ENCODE measurements at regions of chr2 and their contacts with region 1.

Region 1: DNA sequence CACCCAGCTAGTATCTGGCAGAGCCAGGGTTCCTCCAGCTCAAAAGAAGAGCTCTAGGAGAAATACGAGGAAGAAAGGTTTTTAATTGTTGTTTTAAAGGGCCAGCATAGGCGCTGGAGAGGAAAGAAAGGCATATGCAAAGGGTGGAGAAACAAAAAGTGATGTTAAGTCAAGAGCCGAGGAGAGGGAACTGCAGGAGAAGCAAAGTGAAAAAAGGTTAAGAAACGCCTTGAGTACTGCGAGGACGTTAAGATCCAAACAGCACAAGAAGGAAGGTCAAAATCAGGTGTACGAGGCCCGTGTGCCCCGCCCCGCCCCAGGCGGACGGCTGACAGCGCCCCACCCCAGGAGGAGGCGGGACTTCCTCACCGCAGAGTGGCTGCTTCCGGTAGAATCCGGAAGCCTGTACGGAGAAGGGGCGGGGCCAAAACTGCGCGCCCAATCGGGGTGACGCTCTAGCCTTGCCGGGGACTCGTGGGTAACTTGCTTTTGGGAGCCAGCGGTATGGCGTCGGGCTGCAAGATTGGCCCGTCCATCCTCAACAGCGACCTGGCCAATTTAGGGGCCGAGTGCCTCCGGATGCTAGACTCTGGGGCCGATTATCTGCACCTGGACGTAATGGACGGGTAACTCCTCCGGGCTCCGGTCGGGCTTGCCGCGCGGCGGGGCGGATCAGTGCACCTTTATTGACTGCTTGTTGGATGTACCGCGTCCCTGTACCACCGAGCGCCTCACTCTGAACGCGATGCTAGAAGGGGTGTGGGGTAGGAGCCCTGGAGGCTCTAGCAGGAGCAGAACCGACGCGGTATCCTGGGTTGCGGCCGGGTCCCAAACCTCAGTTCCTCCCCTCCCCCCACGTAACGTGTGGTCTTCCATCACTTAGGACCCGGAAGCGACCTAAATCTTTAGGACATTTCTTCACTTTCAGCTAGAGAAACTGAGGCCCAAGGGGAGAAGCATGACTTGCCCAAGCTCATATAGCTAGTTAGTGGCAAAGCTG is at the start of gene RPE:
- DNase-seq: peak; percentile 93 to 97 (median 96)
- ATAC-seq: peak; percentile 94 to 99
- H3K4me3 Mint-ChIP-seq: peak within 1 kb of the TSS; percentile 90 to 98 (median 93)
- H3K27ac Mint-ChIP-seq: peak within 1 kb of the TSS; percentile 86 to 98 (median 94)
- H3K4me1 Mint-ChIP-seq: peaks cover 31 to 71% (median 69%) of the 10 kb centered on the region in 4 donors
- H3K27me3 Mint-ChIP-seq: no peaks in the 10 kb centered on the region
- polyA plus RNA-seq, gene RPE: 17.4 to 20.9 (median 17.7) TPM

Region 2: GRCh38 chr2:209970322-209971110 is 31.9 kb before region 1 on chr2:
- POLR2A ChIA-PET with region 1: no interaction called
- DNase-seq: no peak
- ATAC-seq: no peak
- H3K4me3 Mint-ChIP-seq: no peak overlapping the region
- H3K27ac Mint-ChIP-seq: peak overlapping the region in 1 of 10 donors; percentile 31
- H3K4me1 Mint-ChIP-seq: no peaks in the 10 kb centered on the region
- H3K27me3 Mint-ChIP-seq: peaks cover 6 to 17% (median 10%) of the 10 kb centered on the region in 5 donors

Region 3: GRCh38 chr2:210171309-210172203 is 169.1 kb after region 1 on chr2 and contains the start of gene KANSL1L:
- POLR2A ChIA-PET with region 1: interaction called, 11 read pairs
- DNase-seq: peak; percentile 94 to 98 (median 95)
- ATAC-seq: peak; percentile 82 to 83
- H3K4me3 Mint-ChIP-seq: peak within 1 kb of the TSS; percentile 94 to 99 (median 98)
- H3K27ac Mint-ChIP-seq: peak within 1 kb of the TSS; percentile 92 to 99 (median 96)
- H3K4me1 Mint-ChIP-seq: peaks cover 10 to 38% (median 19%) of the 10 kb centered on the region in 4 donors
- H3K27me3 Mint-ChIP-seq: peaks cover 0 to 1% (median 0%) of the 10 kb centered on the region in 5 donors
- polyA plus RNA-seq, gene KANSL1L: 0.76 to 1.2 (median 0.78) TPM